IMR-90 (cell line): ENCODE measurements at regions of chr3 and their contacts with region 1.

Region 1: GRCh38 chr3:77380136-77380535 is 340.2 kb downstream of the ROBO2 start:
- DNase-seq: no peak
- ATAC-seq: no peak
- H3K4me3 ChIP-seq: no peak overlapping the region
- H3K27ac ChIP-seq: no peak overlapping the region
- H3K4me1 ChIP-seq: no peaks in the 10 kb centered on the region
- H3K27me3 ChIP-seq: no peaks in the 10 kb centered on the region
- CTCF ChIP-seq: no peak
- POLR2A ChIP-seq: no peak
- RAD21 ChIP-seq: no peak

Region 2: GRCh38 chr3:77102951-77103769 is 277.0 kb before region 1 on chr3:
- CTCF ChIA-PET with region 1: no interaction called
- POLR2A ChIA-PET with region 1: no interaction called
- dilution Hi-C with region 1: no loop called
- in situ Hi-C with region 1: no loop called
- intact Hi-C with region 1: no loop called
- DNase-seq: peak; percentile 39
- ATAC-seq: peak; percentile 72
- H3K4me3 ChIP-seq: no peak overlapping the region
- H3K27ac ChIP-seq: no peak overlapping the region
- H3K4me1 ChIP-seq: peaks cover 4% of the 10 kb centered on the region
- H3K27me3 ChIP-seq: no peaks in the 10 kb centered on the region
- CTCF ChIP-seq: no peak
- POLR2A ChIP-seq: no peak
- RAD21 ChIP-seq: no peak

Region 3: DNA sequence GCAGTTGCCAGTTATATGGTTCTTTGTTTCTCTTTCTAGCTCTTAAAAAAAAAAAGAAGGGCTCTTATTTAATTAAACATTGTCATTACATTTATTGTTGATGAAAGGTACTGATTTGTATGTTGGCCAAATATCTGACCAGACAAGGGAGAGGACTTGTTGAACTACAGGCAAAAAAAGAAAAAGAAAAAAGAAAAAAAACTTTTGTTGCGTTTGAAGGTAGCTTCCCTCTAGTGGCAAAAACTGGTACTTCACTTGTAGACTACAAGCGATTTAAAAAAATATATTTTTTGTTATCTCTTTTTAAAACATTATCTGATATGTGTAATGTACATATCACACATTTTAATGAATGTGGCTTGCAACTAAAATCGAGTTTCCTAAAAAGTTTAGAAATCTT is 59.6 kb before region 1 on chr3:
- CTCF ChIA-PET with region 1: no interaction called
- POLR2A ChIA-PET with region 1: no interaction called
- dilution Hi-C with region 1: no loop called
- in situ Hi-C with region 1: no loop called
- intact Hi-C with region 1: no loop called
- DNase-seq: peak; percentile 67
- ATAC-seq: peak; percentile 68
- H3K4me3 ChIP-seq: no peak overlapping the region
- H3K27ac ChIP-seq: no peak overlapping the region
- H3K4me1 ChIP-seq: 0 out of 2 replicates have a peak, but pooled peaks cover 2% of the 10 kb centered on the region
- H3K27me3 ChIP-seq: no peaks in the 10 kb centered on the region
- CTCF ChIP-seq: peak; percentile 68
- POLR2A ChIP-seq: no peak
- RAD21 ChIP-seq: peak; percentile 44

Region 4: DNA sequence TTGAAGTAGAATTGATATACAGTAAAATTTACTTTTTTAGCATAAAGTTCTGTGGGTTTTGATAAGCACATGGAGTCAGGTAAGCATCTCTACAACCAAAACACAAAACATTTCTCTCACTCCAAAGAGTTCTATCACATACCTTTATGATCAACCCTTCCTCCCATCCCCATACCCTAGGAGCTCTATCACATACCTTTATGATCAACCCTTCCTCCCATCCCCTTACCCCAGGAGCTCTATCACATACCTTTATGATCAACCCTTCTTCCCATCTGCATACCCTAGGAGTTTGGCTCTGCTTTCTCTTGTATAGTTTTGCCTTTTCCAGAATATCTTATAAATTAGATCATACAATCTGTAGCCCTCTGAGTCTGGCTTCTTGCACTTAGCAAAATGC is 25.2 kb before region 1 on chr3:
- CTCF ChIA-PET with region 1: no interaction called
- POLR2A ChIA-PET with region 1: no interaction called
- dilution Hi-C with region 1: no loop called
- in situ Hi-C with region 1: no loop called
- intact Hi-C with region 1: loop called (anchors 1 kb)
- DNase-seq: no peak
- ATAC-seq: no peak
- H3K4me3 ChIP-seq: no peak overlapping the region
- H3K27ac ChIP-seq: no peak overlapping the region
- H3K4me1 ChIP-seq: no peaks in the 10 kb centered on the region
- H3K27me3 ChIP-seq: no peaks in the 10 kb centered on the region
- CTCF ChIP-seq: no peak
- POLR2A ChIP-seq: no peak
- RAD21 ChIP-seq: no peak

Region 5: DNA sequence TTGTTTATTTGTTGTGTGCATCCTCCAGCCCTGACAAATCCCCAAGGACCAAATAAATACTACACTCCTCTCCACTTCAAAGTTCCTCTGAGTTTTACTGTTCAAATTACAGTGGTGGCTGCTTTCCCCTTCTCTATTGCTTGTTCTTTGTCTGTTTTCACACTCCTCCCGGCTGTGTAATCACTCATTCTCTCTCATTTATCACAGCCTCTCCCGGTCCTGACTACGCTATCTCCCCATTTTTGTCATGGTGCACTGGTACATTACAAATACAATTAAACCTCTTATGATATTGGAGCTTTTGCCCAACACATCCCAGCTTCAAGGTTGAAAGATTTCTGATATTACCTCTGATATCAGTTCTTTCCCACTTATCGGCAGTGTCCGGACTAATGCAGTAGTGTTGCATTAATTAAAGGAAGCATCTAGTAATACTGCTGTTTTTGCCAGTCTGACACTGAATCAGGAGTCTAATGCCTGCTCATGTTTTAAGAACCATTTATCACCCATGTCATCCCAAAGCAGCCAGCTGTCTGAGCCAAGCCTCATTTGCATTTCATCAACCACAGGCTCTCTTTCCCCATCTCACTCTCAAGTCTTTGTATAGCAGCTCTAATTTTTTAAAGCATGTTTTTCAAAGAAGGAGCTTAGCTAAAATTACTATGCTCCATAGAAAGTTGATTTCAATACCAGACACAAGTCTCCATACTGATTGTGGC is 400.3 kb after region 1 on chr3:
- CTCF ChIA-PET with region 1: no interaction called
- POLR2A ChIA-PET with region 1: no interaction called
- dilution Hi-C with region 1: no loop called
- in situ Hi-C with region 1: no loop called
- intact Hi-C with region 1: no loop called
- DNase-seq: no peak
- ATAC-seq: no peak
- H3K4me3 ChIP-seq: no peak overlapping the region
- H3K27ac ChIP-seq: no peak overlapping the region
- H3K4me1 ChIP-seq: no peaks in the 10 kb centered on the region
- H3K27me3 ChIP-seq: no peaks in the 10 kb centered on the region
- CTCF ChIP-seq: no peak
- POLR2A ChIP-seq: no peak
- RAD21 ChIP-seq: no peak